MCF 10A (cell line): ENCODE measurements at regions of chr1 and their contacts with region 1.

Region 1: GRCh38 chr1:209565759-209566678 is 17.5 kb upstream of the CAMK1G start:
- DNase-seq: peak; percentile 97
- H3K4me3 Mint-ChIP-seq: peak overlapping the region; percentile 49
- H3K27ac Mint-ChIP-seq: no peak overlapping the region
- H3K4me1 Mint-ChIP-seq: peaks cover 62% of the 10 kb centered on the region
- H3K27me3 Mint-ChIP-seq: peaks cover 3% of the 10 kb centered on the region
- CTCF ChIP-seq: peak; percentile 98

Region 2: DNA sequence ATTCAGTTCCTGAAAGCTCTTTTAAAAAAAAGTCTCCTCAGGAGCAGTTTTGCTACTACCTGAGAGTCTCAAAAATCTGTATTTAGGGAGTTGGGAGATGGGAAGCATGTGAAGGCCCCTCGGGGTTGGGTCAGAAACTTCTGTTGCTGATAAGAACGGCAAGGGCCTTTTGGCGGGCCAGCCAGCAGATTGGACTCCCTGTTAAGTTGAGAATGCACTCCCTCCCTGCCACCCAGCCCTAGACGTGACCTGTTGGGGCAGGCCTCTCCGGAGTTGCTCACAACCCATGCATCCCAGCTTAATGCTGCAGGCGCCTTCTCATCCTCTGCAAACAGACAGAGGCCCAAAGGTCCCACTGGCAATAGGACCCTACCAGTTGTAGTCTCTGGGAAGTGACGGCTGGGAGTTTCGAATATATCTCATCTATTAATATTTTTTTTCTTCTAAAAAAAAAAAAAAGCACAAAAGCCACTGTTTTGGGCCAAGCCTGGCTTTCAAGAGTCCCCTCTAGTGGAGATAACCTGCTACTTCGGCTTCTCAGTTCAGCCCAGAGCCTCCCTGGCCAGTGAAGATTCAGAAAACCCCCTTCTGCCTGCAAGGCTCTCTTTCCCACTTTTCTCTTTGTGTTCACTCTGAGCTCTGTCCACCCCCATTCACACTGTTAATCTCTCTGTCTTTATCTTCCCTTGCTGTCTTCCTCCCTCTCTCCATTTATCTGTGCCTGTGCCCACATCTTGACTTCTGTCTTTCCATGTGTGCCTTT is 1327.1 kb before region 1 on chr1:
- CTCF ChIA-PET with region 1: no interaction called
- POLR2A ChIA-PET with region 1: no interaction called
- intact Hi-C with region 1: no loop called
- DNase-seq: peak; percentile 93
- H3K4me3 Mint-ChIP-seq: no peak overlapping the region
- H3K27ac Mint-ChIP-seq: peak overlapping the region; percentile 81
- H3K4me1 Mint-ChIP-seq: peaks cover 60% of the 10 kb centered on the region
- H3K27me3 Mint-ChIP-seq: no peaks in the 10 kb centered on the region
- CTCF ChIP-seq: peak; percentile 98

Region 3: GRCh38 chr1:209162651-209163050 is 403.4 kb before region 1 on chr1:
- CTCF ChIA-PET with region 1: no interaction called
- POLR2A ChIA-PET with region 1: no interaction called
- intact Hi-C with region 1: no loop called
- DNase-seq: no peak
- H3K4me3 Mint-ChIP-seq: no peak overlapping the region
- H3K27ac Mint-ChIP-seq: no peak overlapping the region
- H3K4me1 Mint-ChIP-seq: no peaks in the 10 kb centered on the region
- H3K27me3 Mint-ChIP-seq: peaks cover 11% of the 10 kb centered on the region
- CTCF ChIP-seq: no peak

Region 4: GRCh38 chr1:209354111-209354839 is 211.7 kb before region 1 on chr1:
- CTCF ChIA-PET with region 1: interaction called, 61 read pairs
- POLR2A ChIA-PET with region 1: interaction called, 48 read pairs
- intact Hi-C with region 1: loop called (anchors 1 kb)
- DNase-seq: peak; percentile 99
- H3K4me3 Mint-ChIP-seq: peak overlapping the region; percentile 7
- H3K27ac Mint-ChIP-seq: peak overlapping the region; percentile 78
- H3K4me1 Mint-ChIP-seq: peaks cover 41% of the 10 kb centered on the region
- H3K27me3 Mint-ChIP-seq: no peaks in the 10 kb centered on the region
- CTCF ChIP-seq: peak; percentile 98

Region 5: GRCh38 chr1:209421186-209421585 is 144.8 kb before region 1 on chr1:
- CTCF ChIA-PET with region 1: interaction called, 25 read pairs
- POLR2A ChIA-PET with region 1: interaction called, 34 read pairs
- intact Hi-C with region 1: no loop called
- DNase-seq: no peak
- H3K4me3 Mint-ChIP-seq: no peak overlapping the region
- H3K27ac Mint-ChIP-seq: peak overlapping the region; percentile 9
- H3K4me1 Mint-ChIP-seq: peaks cover 33% of the 10 kb centered on the region
- H3K27me3 Mint-ChIP-seq: no peaks in the 10 kb centered on the region
- CTCF ChIP-seq: no peak

Region 6: GRCh38 chr1:209490013-209490412 is 76.0 kb before region 1 on chr1:
- CTCF ChIA-PET with region 1: interaction called, 243 read pairs
- POLR2A ChIA-PET with region 1: interaction called, 27 read pairs
- intact Hi-C with region 1: loop called (anchors 1 kb)
- DNase-seq: peak; percentile 69
- H3K4me3 Mint-ChIP-seq: no peak overlapping the region
- H3K27ac Mint-ChIP-seq: no peak overlapping the region
- H3K4me1 Mint-ChIP-seq: peaks cover 26% of the 10 kb centered on the region
- H3K27me3 Mint-ChIP-seq: no peaks in the 10 kb centered on the region
- CTCF ChIP-seq: peak; percentile 90

Region 7: DNA sequence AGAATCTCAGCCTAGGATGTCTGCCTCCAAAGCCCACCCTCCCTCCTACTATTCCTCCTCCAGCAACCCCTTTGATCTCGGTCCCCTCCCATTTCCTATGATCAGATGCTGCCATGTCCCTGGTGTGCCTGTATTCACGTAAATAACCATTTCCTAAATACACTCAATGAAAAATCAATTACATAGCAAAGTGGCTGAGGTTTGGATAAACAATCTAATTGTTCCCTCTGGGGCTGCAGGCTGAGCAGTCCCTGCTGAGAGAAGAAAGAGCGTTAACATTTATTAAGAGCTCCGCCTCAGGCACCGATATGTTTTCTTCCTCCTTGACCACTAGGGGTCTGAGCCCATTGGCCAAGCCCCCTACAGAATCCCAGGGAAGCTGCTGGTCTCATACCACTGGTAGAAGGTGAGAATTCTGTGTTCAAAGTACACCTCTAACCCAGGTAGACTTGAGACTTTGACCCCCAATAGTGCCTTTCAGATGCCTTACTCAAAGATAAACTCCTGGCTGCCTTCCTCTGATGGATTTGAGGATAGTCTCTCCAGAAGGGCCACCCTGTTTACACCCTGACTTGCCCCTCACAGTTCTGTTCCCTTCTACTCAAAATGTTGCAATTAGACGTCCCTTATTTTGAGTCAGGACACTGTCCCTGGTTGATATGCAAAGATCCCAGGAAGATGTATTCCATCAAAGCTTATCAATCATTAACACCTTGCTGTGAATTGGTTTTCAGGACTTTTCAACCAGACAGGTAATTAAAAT is 16.4 kb before region 1 on chr1:
- CTCF ChIA-PET with region 1: interaction called, 118 read pairs
- POLR2A ChIA-PET with region 1: interaction called, 26 read pairs
- intact Hi-C with region 1: no loop called
- DNase-seq: no peak
- H3K4me3 Mint-ChIP-seq: no peak overlapping the region
- H3K27ac Mint-ChIP-seq: no peak overlapping the region
- H3K4me1 Mint-ChIP-seq: peaks cover 24% of the 10 kb centered on the region
- H3K27me3 Mint-ChIP-seq: no peaks in the 10 kb centered on the region
- CTCF ChIP-seq: no peak

Region 8: DNA sequence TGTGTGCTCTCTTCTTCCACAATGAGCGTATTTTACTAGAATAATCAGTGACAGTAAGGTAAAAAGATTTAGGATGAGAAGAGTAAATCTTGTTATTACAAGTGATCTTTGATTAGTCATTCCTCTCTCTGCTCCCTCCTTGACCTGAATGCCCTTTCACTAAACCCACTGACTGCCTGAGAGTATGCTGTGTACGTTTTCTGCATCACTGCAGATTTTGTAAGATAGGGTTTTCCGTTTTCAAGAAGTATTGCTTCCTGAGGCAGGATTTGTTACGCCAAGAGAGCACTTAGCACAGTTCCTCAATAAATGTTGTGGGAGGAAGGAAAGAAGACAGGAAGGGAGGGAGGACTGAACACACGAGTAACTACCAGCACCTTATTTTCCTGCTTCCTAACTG is 93.9 kb after region 1 on chr1:
- CTCF ChIA-PET with region 1: interaction called, 7 read pairs
- POLR2A ChIA-PET with region 1: interaction called, 10 read pairs
- intact Hi-C with region 1: no loop called
- DNase-seq: peak; percentile 91
- H3K4me3 Mint-ChIP-seq: peak overlapping the region; percentile 4
- H3K27ac Mint-ChIP-seq: peak overlapping the region; percentile 99
- H3K4me1 Mint-ChIP-seq: peaks cover 66% of the 10 kb centered on the region
- H3K27me3 Mint-ChIP-seq: no peaks in the 10 kb centered on the region
- CTCF ChIP-seq: no peak

Region 9: GRCh38 chr1:209805875-209806760 is 240.1 kb after region 1 on chr1 and contains the start of gene IRF6:
- CTCF ChIA-PET with region 1: interaction called, 5 read pairs
- POLR2A ChIA-PET with region 1: interaction called, 10 read pairs
- intact Hi-C with region 1: no loop called
- DNase-seq: peak; percentile 99
- H3K4me3 Mint-ChIP-seq: peak within 1 kb of the TSS; percentile 90
- H3K27ac Mint-ChIP-seq: peak within 1 kb of the TSS; percentile 92
- H3K4me1 Mint-ChIP-seq: peaks cover 74% of the 10 kb centered on the region
- H3K27me3 Mint-ChIP-seq: no peaks in the 10 kb centered on the region
- CTCF ChIP-seq: no peak
- total RNA-seq, gene IRF6: 87.8 and 106 TPM in 2 replicates